ENCODE measurements at regions of chr1 and their contacts with region 1.

Region 1: DNA sequence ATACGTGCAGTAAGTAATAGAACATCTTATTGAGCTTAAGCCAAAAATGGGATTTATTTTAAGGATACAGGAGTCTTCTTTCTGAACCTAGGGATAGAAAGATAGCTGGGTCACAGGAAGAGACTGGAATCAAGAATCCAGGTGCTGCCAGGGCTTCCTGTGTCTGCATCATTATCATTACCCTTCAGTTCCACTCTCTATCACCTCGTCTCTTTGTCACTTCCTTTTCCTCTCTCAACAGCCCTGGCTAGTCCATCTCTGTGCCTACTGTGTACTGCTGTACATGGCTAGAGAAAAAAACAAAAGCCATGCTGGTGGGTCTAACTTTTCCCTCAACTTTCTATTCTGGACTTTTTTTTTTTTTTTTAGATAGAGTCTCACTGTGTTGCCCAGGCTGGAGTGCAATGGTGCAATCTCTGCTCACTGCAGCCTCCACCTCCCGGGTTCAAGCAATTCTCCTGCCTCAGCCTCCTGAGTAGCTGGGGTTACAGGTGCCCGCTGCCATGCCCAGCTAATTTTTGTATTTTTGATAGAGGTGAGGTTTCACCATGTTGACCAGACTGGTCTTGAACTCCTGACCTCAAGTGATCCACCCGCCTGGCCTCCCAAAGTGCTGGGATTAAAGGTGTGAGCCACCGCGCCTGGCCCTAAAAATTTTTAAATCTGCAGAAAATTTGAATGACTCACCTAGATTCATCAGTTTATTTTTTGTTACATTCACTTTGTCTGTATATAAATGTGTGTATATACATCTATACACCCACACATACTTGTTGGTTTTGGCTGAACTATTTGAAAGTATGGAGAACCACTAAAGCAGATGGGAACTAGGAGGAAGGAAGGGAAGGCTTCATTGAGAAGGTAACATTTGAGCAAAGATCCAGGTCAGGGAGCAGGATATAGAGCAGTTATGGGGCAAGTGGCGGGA is 31.9 kb downstream of the UBE4B start:
- DNase-seq: no peak
- H3K4me3 ChIP-seq: no peak overlapping the region
- H3K27ac ChIP-seq: peak overlapping the region in 1 of 2 donors; percentile 72
- H3K4me1 ChIP-seq: peaks cover 0 to 56% (median 23%) of the 10 kb centered on the region in 4 donors
- H3K27me3 ChIP-seq: no peaks in the 10 kb centered on the region
- CTCF ChIP-seq: no peak

Region 2: GRCh38 chr1:9730096-9730901 is 334.4 kb before region 1 on chr1:
- intact Hi-C with region 1: no loop called
- DNase-seq: peak in 1 of 2 donors; percentile 68
- H3K4me3 ChIP-seq: no peak overlapping the region
- H3K27ac ChIP-seq: no peak overlapping the region
- H3K4me1 ChIP-seq: no peaks in the 10 kb centered on the region
- H3K27me3 ChIP-seq: no peaks in the 10 kb centered on the region
- CTCF ChIP-seq: no peak

Region 3: DNA sequence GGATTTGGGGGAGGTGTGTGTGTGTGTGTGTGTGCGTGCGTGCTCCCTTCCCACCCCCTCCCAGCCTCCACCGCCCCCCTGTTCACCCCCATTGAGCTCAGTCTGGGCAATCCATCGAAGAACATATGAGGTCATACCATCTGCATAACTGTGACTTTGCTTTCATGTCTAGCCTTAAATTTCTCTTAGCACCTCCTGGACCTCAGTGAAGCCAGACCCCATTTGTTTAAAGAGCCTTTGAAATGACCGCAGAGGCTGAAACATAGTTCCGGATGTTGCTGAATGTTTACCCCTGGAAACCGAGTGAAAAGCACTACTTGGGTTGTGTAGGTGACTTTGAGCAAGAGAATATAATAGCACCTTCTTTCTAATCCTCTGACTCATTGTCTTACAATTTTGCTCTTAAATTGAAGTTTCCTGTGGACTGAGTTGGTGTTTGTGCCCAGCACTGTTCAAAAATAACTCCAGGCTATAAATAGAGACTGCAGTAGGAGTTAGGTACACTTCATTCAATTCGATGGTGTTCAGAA is 43.5 kb after region 1 on chr1:
- intact Hi-C with region 1: loop called (anchors 5 kb)
- DNase-seq: no peak
- H3K4me3 ChIP-seq: peak overlapping the region; percentile 18 to 22
- H3K27ac ChIP-seq: peak overlapping the region; percentile 80 to 82
- H3K4me1 ChIP-seq: peaks cover 0 to 54% (median 26%) of the 10 kb centered on the region in 4 donors
- H3K27me3 ChIP-seq: no peaks in the 10 kb centered on the region
- CTCF ChIP-seq: no peak

Measured in tibial artery (tissue), 4 donors.